Caco-2 (cell line): ENCODE measurements at regions of chr12 and their contacts with region 1.

Region 1: DNA sequence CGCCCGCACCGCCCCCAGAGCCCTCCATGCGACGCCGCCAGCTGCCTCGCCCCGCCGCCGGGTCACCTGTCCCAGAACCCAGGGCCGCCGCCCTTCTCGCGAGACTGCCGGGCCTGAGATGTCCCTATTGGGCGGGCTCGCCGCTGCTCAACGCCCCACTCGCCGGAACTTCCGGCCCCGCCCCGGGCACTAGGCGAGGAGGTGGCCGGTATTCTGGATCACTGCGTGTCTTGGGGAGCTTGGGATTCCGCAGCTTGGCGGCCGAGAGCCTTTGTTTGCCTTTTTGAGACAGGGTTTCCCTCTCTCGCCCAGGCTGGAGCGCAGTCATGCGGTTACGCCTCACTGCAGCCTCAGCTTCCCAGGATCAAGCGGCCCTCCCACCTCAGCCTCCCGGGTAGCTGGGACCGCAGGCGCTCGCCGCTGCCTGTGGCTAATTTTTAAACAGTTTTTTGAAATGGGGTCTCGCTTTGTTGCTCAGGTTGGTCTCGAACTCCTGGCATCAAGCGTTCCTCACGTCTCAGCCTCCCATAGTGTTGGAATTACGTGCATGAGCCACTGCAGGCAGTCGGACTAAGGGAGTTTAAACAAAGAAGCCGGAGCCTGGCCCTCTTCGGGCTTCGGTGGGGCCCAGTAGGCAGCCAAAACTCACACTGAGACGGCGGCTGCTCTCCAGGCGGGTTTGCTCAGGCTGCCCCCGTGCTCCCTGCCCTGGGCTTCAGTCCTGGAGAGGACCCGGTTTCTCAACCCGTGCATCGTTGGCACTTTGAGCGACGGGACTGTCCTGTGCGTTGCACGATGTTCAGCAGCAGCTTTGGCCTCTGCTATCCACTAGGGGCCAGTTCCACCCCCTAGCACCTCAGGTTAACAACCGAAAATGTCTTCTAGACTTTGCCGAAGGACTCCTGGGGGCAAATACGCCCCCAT is at the start of gene SLC15A4:
- DNase-seq: peak; percentile 97
- H3K4me3 ChIP-seq: peak within 1 kb of the TSS; percentile 98
- H3K4me3 Mint-ChIP-seq: peak within 1 kb of the TSS; percentile 75
- H3K27ac Mint-ChIP-seq: peak within 1 kb of the TSS; percentile 46
- H3K4me1 ChIP-seq: peaks cover 6% of the 10 kb centered on the region; the same call in 1 of the 2 replicates
- H3K4me1 Mint-ChIP-seq: peaks cover 7% of the 10 kb centered on the region
- H3K27me3 ChIP-seq: no peaks in the 10 kb centered on the region
- H3K27me3 Mint-ChIP-seq: no peaks in the 10 kb centered on the region
- CTCF ChIP-seq: peak in 1 of 2 experiments; percentile 49
- total RNA-seq, gene SLC15A4: 17.8 and 19.6 TPM in 2 replicates

Region 2: DNA sequence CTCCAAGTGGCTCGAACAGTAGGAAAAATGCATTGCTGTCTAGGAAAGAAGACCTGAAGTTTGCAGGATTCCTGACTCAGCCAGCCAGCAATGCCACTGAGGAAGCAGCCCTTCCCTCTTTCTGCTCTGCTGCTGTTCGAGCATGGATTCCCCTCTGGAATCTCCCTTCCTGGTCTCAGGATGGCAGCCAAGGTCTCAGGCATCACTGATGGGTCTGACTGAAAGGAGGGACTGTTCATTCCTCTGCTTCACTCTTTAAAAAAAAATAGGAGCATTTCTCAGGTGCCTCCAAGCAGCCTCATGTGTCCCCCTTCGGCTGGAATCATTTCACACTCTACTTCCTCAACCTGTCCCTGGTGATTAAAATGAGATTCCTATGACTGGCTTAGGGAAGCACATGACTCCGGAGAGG is 62.8 kb before region 1 on chr12:
- CTCF ChIA-PET with region 1: no interaction called
- POLR2A ChIA-PET with region 1: no interaction called
- intact Hi-C with region 1: no loop called
- DNase-seq: no peak
- H3K4me3 ChIP-seq: no peak overlapping the region
- H3K4me3 Mint-ChIP-seq: no peak overlapping the region
- H3K27ac Mint-ChIP-seq: no peak overlapping the region
- H3K4me1 ChIP-seq: no peaks in the 10 kb centered on the region
- H3K4me1 Mint-ChIP-seq: no peaks in the 10 kb centered on the region
- H3K27me3 ChIP-seq: no peaks in the 10 kb centered on the region
- H3K27me3 Mint-ChIP-seq: peaks cover 2% of the 10 kb centered on the region
- CTCF ChIP-seq: no peak

Region 3: GRCh38 chr12:128801879-128802391 is 22.2 kb before region 1 on chr12:
- CTCF ChIA-PET with region 1: no interaction called
- POLR2A ChIA-PET with region 1: no interaction called
- intact Hi-C with region 1: no loop called
- DNase-seq: no peak
- H3K4me3 ChIP-seq: no peak overlapping the region
- H3K4me3 Mint-ChIP-seq: no peak overlapping the region
- H3K27ac Mint-ChIP-seq: no peak overlapping the region
- H3K4me1 ChIP-seq: no peaks in the 10 kb centered on the region
- H3K4me1 Mint-ChIP-seq: no peaks in the 10 kb centered on the region
- H3K27me3 ChIP-seq: no peaks in the 10 kb centered on the region
- H3K27me3 Mint-ChIP-seq: no peaks in the 10 kb centered on the region
- CTCF ChIP-seq: no peak

Region 4: GRCh38 chr12:128844031-128844635 is 20.0 kb after region 1 on chr12:
- CTCF ChIA-PET with region 1: no interaction called
- POLR2A ChIA-PET with region 1: interaction called, 12 read pairs
- intact Hi-C with region 1: no loop called
- DNase-seq: no peak
- H3K4me3 ChIP-seq: no peak overlapping the region
- H3K4me3 Mint-ChIP-seq: no peak overlapping the region
- H3K27ac Mint-ChIP-seq: no peak overlapping the region
- H3K4me1 ChIP-seq: no peaks in the 10 kb centered on the region
- H3K4me1 Mint-ChIP-seq: no peaks in the 10 kb centered on the region
- H3K27me3 ChIP-seq: no peaks in the 10 kb centered on the region
- H3K27me3 Mint-ChIP-seq: peaks cover 4% of the 10 kb centered on the region
- CTCF ChIP-seq: no peak

Region 5: GRCh38 chr12:128861226-128862016 is 37.2 kb after region 1 on chr12:
- CTCF ChIA-PET with region 1: no interaction called
- POLR2A ChIA-PET with region 1: interaction called, 3 read pairs
- intact Hi-C with region 1: loop called (anchors 1 kb)
- DNase-seq: peak; percentile 72 to 80
- H3K4me3 ChIP-seq: no peak overlapping the region
- H3K4me3 Mint-ChIP-seq: peak overlapping the region; percentile 46
- H3K27ac Mint-ChIP-seq: peak overlapping the region; percentile 31
- H3K4me1 ChIP-seq: peaks cover 19% of the 10 kb centered on the region
- H3K4me1 Mint-ChIP-seq: peaks cover 7% of the 10 kb centered on the region
- H3K27me3 ChIP-seq: no peaks in the 10 kb centered on the region
- H3K27me3 Mint-ChIP-seq: no peaks in the 10 kb centered on the region
- CTCF ChIP-seq: no peak

Region 6: DNA sequence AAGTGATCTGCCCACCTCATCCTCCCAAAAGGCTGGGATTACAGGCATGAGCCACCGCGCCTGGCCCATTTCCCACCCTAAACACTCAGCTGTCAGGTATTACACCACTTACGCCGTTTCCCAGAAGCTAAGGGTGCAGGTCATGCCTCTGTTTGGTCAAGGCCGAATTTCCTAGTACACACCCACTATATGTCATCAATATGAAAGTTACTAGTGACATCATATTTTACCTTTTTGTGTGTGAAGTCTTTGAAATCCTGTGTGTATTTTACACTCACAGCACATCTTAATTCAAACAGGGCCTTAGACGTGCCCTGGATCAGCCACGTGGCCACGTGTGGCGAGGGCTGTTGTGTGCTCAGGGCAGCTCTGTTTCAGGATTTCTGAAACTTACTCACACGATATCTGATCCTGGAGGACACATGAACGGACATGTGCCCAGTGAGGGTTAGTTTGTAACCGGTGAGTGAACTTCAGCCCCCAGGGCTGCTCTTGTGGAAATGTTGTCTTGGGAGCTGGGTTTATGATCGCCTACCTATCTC is 80.9 kb after region 1 on chr12:
- CTCF ChIA-PET with region 1: no interaction called
- POLR2A ChIA-PET with region 1: no interaction called
- intact Hi-C with region 1: loop called (anchors 5 kb)
- DNase-seq: peak in 1 of 2 experiments; percentile 34
- H3K4me3 ChIP-seq: no peak overlapping the region
- H3K4me3 Mint-ChIP-seq: no peak overlapping the region
- H3K27ac Mint-ChIP-seq: no peak overlapping the region
- H3K4me1 ChIP-seq: peaks cover 22% of the 10 kb centered on the region
- H3K4me1 Mint-ChIP-seq: peaks cover 17% of the 10 kb centered on the region
- H3K27me3 ChIP-seq: no peaks in the 10 kb centered on the region
- H3K27me3 Mint-ChIP-seq: no peaks in the 10 kb centered on the region
- CTCF ChIP-seq: no peak

Region 7: GRCh38 chr12:129257524-129257923 is 433.3 kb after region 1 on chr12:
- CTCF ChIA-PET with region 1: no interaction called
- POLR2A ChIA-PET with region 1: no interaction called
- intact Hi-C with region 1: no loop called
- DNase-seq: no peak
- H3K4me3 ChIP-seq: no peak overlapping the region
- H3K4me3 Mint-ChIP-seq: no peak overlapping the region
- H3K27ac Mint-ChIP-seq: no peak overlapping the region
- H3K4me1 ChIP-seq: no peaks in the 10 kb centered on the region
- H3K4me1 Mint-ChIP-seq: no peaks in the 10 kb centered on the region
- H3K27me3 ChIP-seq: no peaks in the 10 kb centered on the region
- H3K27me3 Mint-ChIP-seq: peaks cover 2% of the 10 kb centered on the region
- CTCF ChIP-seq: no peak